GM10248 (cell line): ENCODE measurements at regions of chr1 and their contacts with region 1.

Region 1: DNA sequence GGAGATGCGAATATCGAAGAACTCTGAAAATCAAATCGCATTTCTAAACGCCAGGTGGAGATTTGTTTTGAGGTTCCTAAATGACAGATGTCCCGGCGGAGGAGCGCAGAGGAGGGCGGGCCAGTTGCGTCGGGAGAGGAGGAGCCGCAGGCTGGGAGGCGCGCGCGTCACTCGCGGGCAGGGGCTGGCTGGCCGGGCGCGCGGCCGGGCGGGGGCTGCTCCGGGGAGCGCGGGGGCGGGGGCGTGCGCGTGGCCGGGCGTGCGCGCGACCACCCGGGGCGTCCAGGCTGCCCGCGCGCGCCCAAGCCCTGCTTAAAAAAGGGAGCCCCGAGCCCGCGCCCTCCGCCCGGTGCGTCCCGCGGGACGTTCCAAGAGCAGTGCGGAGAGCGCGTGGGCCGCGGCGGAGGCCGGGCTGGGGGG is 47.3 kb downstream of the H3-3A start:
- DNase-seq: peak; percentile 96
- CTCF ChIP-seq: no peak

Region 2: DNA sequence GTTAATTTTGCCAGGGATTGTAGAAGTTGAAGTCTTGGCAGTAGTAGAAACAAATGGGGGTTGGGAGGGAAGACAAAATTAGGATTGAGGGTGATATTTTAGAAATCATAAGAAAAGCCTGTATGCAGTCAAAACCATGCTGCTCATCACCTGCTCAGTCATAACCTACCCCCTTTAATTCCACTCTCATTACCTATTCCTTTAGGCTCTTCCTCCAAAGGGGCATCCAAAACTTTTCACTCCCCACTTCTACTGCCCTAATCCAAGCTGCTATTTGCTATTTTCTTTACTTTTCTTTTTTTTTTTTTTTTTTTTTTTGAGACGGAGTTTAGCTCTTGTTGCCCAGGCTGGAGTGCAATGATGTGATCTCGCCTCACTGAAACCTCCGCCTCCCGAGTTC is 35.8 kb before region 1 on chr1:
- CTCF ChIA-PET with region 1: interaction called, 12 read pairs
- POLR2A ChIA-PET with region 1: no interaction called
- DNase-seq: no peak
- CTCF ChIP-seq: no peak